ENCODE measurements at regions of chr13 and their contacts with region 1.

Region 1: GRCh38 chr13:46382224-46382623 is 4.8 kb downstream of the RUBCNL start:
- DNase-seq: no peak
- ATAC-seq: peak; percentile 42
- H3K4me3 Mint-ChIP-seq: peak overlapping the region; percentile 72
- H3K27ac Mint-ChIP-seq: peak overlapping the region; percentile 93
- H3K4me1 Mint-ChIP-seq: peaks cover 75% of the 10 kb centered on the region
- H3K27me3 Mint-ChIP-seq: no peaks in the 10 kb centered on the region
- CTCF ChIP-seq: no peak

Region 2: DNA sequence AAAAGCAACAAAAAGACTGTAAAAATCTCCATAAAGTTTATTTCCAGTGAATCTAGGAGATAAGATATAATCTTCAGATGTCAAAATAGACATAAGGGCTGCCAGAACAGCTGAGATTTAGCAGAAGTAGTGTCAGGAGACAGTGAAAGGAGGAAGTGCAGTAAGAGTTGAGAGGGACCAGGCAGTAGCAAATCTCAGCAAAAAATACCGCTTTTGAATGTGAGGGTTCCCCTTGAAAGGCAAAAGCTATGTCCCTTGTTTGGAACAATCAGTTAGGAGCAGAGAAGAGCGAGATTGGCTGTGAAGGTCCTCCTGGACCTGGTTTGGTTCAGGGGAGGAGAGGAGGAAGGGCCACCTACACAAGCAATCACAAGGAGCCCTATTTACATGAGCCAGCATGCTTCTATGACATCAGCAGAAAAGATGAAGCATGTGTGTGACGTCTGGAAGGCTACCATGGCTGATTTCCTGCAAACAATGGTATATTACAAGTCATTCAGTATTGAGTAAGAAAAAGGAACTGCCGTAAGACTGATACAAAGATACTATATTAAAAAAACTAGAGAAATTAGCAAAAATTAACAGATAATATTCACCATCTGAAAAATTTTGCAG is 431.7 kb before region 1 on chr13:
- CTCF ChIA-PET with region 1: no interaction called
- POLR2A ChIA-PET with region 1: no interaction called
- intact Hi-C with region 1: no loop called
- DNase-seq: no peak
- ATAC-seq: no peak
- H3K4me3 Mint-ChIP-seq: no peak overlapping the region
- H3K27ac Mint-ChIP-seq: peak overlapping the region; percentile 41
- H3K4me1 Mint-ChIP-seq: no peaks in the 10 kb centered on the region
- H3K27me3 Mint-ChIP-seq: no peaks in the 10 kb centered on the region
- CTCF ChIP-seq: no peak

Region 3: DNA sequence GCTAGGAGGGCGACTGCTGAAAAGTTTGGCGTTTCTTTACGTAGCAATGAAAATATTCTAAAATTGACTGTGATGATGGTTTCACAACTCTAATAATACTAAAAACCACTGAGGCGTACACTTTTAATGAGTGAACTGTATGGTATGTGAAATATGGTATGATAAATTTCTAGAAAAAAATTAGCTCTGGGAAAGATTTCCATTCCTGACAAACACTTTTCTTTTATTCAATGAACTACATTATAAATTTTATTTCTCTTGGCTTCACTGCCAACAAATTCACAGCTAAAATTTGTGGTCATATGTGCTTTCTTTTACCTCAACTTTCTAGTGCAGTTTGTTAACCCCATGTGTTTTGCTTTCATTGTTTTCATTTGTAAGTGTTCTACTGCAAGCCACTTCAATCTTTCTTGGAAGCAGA is 340.8 kb before region 1 on chr13:
- CTCF ChIA-PET with region 1: no interaction called
- POLR2A ChIA-PET with region 1: no interaction called
- intact Hi-C with region 1: no loop called
- DNase-seq: no peak
- ATAC-seq: no peak
- H3K4me3 Mint-ChIP-seq: no peak overlapping the region
- H3K27ac Mint-ChIP-seq: no peak overlapping the region
- H3K4me1 Mint-ChIP-seq: no peaks in the 10 kb centered on the region
- H3K27me3 Mint-ChIP-seq: no peaks in the 10 kb centered on the region
- CTCF ChIP-seq: no peak

Region 4: DNA sequence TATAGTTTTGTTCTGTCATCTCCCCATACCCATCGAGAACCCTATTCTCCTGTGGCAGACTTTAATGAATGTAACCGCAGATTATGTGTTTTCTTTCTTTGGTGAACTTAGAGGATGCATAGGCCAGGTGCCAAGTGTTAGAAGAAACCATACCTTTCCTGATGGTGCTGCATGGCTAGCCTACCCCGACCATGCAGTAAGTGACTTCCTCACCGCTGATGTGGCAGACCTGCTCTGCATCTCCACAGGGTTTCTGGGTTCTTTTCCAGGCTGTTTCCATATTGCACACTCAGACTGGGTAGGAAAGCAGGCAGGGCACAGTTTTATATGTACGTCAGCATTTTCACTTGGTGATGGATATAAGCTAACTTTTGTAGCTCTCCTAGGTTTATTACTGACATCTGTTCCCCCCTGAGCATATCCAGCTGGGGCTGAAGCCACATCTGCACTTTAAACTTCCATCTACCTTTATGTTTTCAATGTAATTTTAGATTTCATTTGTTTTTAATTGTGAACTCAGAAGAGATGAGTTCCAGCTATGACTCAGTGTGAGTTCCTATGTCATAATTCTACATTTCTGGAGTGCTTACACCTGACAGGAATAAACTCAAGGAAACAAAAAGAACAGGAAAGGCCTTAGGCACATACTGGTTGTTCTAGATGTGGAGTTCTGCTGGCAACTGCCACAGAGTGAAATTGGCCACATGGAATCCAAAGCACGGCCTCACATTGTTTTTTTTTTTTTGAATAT is 213.1 kb after region 1 on chr13:
- CTCF ChIA-PET with region 1: no interaction called
- POLR2A ChIA-PET with region 1: no interaction called
- intact Hi-C with region 1: loop called (anchors 5 kb)
- DNase-seq: no peak
- ATAC-seq: peak; percentile 74
- H3K4me3 Mint-ChIP-seq: peak overlapping the region; percentile 60
- H3K27ac Mint-ChIP-seq: peak overlapping the region; percentile 86
- H3K4me1 Mint-ChIP-seq: peaks cover 95% of the 10 kb centered on the region
- H3K27me3 Mint-ChIP-seq: no peaks in the 10 kb centered on the region
- CTCF ChIP-seq: no peak

Measured in activated B cell treated with CpG ODN at 0.5 μM for 24 hours (primary cell).